ENCODE measurements at regions of chr4 and their contacts with region 1.

Region 1: DNA sequence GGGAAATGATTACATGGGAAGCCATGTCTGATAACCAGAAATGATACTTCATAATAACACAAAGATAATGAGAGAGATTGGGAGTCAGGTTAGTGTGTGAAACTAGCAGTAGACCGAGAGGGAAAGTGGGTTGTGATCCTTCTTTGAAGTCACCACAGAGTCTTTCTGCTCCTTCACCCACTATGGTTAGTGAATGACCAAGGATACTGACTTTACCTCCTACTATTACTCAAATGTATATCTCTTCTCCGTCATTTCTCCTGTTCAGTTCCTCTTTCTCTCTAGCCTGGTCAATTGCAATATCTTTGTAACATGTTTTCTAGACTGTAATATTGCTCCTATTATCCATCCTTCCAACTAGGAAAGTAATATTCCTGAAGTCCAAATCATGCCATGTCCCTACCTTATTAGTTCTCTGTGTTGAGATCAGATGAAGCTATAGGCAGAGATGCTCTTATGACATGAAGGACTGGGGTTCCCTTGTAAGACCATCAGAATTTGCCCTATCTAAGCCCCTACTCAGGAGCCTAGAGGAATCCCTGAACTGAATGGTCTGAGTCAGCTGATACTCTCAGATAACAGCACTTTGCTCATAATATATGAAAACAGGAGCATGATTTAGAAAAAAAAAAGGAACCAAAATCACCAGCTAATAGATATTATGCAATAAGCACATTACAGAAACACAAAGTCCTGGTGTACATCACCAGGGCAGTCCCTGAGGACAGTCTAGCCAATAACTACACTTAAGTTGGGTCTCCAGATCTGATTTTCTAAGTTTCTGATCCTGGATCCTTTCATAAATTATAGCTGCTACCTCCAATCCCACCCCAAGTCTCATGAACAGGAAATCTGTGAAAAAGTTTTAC is 81.2 kb downstream of the SHROOM3 start:
- DNase-seq: no peak
- H3K4me3 ChIP-seq: no peak overlapping the region
- H3K27ac ChIP-seq: no peak overlapping the region
- H3K4me1 ChIP-seq: no peaks in the 10 kb centered on the region
- H3K27me3 ChIP-seq: no peaks in the 10 kb centered on the region
- CTCF ChIP-seq: no peak
- POLR2A ChIP-seq: no peak

Region 2: DNA sequence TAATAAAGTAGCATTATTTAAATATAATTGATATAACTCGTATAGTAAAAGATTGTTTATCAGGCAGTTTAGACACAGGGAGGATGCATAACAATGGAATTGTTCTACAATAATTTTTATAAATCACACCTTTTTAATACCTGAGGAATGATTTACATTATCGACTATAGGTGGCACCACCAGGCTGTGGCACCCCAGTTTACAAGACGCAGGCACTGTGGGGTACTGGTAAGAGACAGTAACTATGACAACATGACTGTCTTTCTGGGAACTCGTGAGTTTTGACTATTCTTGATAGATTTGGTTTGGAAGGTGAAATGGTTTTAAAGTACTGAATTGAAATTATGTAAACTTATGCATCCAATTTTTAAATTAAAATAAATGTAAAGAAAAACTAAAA is 236.7 kb before region 1 on chr4:
- intact Hi-C with region 1: no loop called
- DNase-seq: no peak
- H3K4me3 ChIP-seq: no peak overlapping the region
- H3K27ac ChIP-seq: no peak overlapping the region
- H3K4me1 ChIP-seq: no peaks in the 10 kb centered on the region
- H3K27me3 ChIP-seq: no peaks in the 10 kb centered on the region
- CTCF ChIP-seq: no peak
- POLR2A ChIP-seq: no peak

Region 3: GRCh38 chr4:76752861-76753501 is 236.8 kb after region 1 on chr4:
- intact Hi-C with region 1: loop called (anchors 5 to 10 kb)
- DNase-seq: peak in 6 of 7 donors; percentile 33 to 71 (median 54)
- H3K4me3 ChIP-seq: no peak overlapping the region
- H3K27ac ChIP-seq: peak overlapping the region in 1 of 5 donors; percentile 38
- H3K4me1 ChIP-seq: peaks cover 0 to 15% of the 10 kb centered on the region in 2 donors
- H3K27me3 ChIP-seq: no peaks in the 10 kb centered on the region
- CTCF ChIP-seq: no peak
- POLR2A ChIP-seq: no peak

Region 4: DNA sequence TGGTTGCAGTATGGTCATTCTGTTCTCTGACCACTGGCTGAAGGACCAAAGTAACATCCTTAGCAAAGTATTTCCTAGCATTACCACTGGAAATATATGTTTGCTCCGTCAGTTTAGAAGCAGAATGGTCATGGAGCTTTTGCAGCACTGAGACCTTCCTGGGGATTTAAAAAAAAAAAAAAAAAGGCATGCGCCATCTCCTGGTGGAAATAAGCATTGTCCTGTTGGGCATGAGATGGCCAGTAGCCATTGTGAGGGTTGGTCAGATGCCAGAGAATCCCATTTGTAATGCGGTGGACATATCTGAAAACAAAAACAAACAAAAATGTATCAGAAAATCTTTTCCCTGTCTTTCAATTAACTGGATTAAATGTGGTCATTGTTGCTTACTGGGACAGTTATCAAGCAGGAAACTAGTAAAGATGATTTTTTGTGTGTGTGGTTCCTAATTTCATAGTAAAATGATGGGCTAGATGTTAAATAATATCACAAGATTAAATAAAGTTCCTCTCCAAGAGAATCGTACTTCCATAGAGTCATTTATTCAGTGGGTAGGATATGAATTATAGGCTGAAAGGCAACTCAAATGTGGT is 242.2 kb after region 1 on chr4:
- intact Hi-C with region 1: loop called (anchors 5 to 10 kb)
- DNase-seq: peak; percentile 38 to 77 (median 63)
- H3K4me3 ChIP-seq: no peak overlapping the region
- H3K27ac ChIP-seq: peak overlapping the region in 2 of 5 donors; percentile 35 to 51
- H3K4me1 ChIP-seq: peaks cover 0 to 24% of the 10 kb centered on the region in 2 donors
- H3K27me3 ChIP-seq: no peaks in the 10 kb centered on the region
- CTCF ChIP-seq: peak; percentile 65 to 84 (median 72)
- POLR2A ChIP-seq: no peak

Region 5: DNA sequence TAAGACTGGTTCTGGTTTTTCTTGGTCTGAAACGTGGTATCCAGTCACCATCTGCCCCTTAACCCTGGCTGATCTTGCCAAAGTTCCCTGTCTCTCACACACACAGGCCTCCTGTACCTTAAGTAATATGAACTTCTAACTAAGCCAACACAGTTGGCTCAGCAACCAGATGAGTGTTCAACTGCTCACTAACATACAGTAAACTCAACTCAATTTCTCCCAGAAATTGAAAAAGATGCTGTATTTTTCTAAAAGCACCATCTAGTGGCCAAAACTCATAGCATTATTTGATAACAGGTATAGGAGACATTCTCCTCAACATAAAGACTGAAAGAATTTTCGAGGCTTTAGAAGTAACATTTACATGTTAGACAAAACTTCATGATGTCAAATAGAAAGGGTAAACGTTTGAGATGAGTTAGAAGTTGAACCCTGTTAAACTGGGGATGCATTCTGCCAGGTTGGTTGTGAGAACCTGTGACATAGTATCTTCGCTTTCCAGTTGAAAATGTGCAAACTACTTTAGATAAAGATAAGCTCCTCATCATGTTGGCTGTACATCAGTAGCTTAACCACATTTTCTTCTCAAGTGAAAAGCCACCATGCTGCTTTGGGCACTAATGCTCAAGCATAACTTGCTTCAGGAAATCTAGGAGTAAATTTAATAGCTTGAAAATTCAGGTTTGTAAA is 528.4 kb after region 1 on chr4:
- intact Hi-C with region 1: loop called in 1 of 2 experiments (anchors 10 kb)
- DNase-seq: no peak
- H3K4me3 ChIP-seq: no peak overlapping the region
- H3K27ac ChIP-seq: peak overlapping the region in 2 of 5 donors; percentile 31 to 56
- H3K4me1 ChIP-seq: peaks cover 0 to 9% of the 10 kb centered on the region in 2 donors
- H3K27me3 ChIP-seq: no peaks in the 10 kb centered on the region
- CTCF ChIP-seq: peak; percentile 34 to 61 (median 54)
- POLR2A ChIP-seq: no peak